ENCODE measurements at regions of chr2 and their contacts with region 1.

Region 1: GRCh38 chr2:56183643-56184499 is at the start of gene CCDC85A:
- DNase-seq: peak; percentile 86 to 95
- H3K4me3 ChIP-seq: peak within 1 kb of the TSS; percentile 59 to 84 (median 68)
- H3K27ac ChIP-seq: peak within 1 kb of the TSS; percentile 15 to 60 (median 37)
- H3K4me1 ChIP-seq: peaks cover 22 to 28% (median 26%) of the 10 kb centered on the region in 4 donors
- H3K27me3 ChIP-seq: peaks cover 0 to 84% (median 27%) of the 10 kb centered on the region in 3 donors
- CTCF ChIP-seq: peak in 5 of 7 experiments; percentile 68 to 87 (median 81)
- EP300 ChIP-seq: no peak
- POLR2A ChIP-seq: no peak
- total RNA-seq, gene CCDC85A: 0.89 to 6.4 (median 3.7) TPM

Region 2: GRCh38 chr2:56754066-56754615 is 570.3 kb after region 1 on chr2:
- intact Hi-C with region 1: loop called (anchors 10 kb)
- DNase-seq: no peak
- H3K4me3 ChIP-seq: no peak overlapping the region
- H3K27ac ChIP-seq: no peak overlapping the region
- H3K4me1 ChIP-seq: no peaks in the 10 kb centered on the region
- H3K27me3 ChIP-seq: no peaks in the 10 kb centered on the region
- CTCF ChIP-seq: no peak
- EP300 ChIP-seq: no peak
- POLR2A ChIP-seq: no peak

Region 3: GRCh38 chr2:57516698-57517340 is 1332.9 kb after region 1 on chr2:
- intact Hi-C with region 1: loop called (anchors 5 kb)
- DNase-seq: peak in 1 of 2 donors; percentile 59
- H3K4me3 ChIP-seq: no peak overlapping the region
- H3K27ac ChIP-seq: no peak overlapping the region
- H3K4me1 ChIP-seq: peaks cover 0 to 4% (median 0%) of the 10 kb centered on the region in 4 donors
- H3K27me3 ChIP-seq: no peaks in the 10 kb centered on the region
- CTCF ChIP-seq: peak in 5 of 7 experiments; percentile 23 to 64 (median 59)
- EP300 ChIP-seq: no peak
- POLR2A ChIP-seq: no peak